Heart right ventricle (tissue), 16 donors: ENCODE measurements at regions of chr2 and their contacts with region 1.

Region 1: DNA sequence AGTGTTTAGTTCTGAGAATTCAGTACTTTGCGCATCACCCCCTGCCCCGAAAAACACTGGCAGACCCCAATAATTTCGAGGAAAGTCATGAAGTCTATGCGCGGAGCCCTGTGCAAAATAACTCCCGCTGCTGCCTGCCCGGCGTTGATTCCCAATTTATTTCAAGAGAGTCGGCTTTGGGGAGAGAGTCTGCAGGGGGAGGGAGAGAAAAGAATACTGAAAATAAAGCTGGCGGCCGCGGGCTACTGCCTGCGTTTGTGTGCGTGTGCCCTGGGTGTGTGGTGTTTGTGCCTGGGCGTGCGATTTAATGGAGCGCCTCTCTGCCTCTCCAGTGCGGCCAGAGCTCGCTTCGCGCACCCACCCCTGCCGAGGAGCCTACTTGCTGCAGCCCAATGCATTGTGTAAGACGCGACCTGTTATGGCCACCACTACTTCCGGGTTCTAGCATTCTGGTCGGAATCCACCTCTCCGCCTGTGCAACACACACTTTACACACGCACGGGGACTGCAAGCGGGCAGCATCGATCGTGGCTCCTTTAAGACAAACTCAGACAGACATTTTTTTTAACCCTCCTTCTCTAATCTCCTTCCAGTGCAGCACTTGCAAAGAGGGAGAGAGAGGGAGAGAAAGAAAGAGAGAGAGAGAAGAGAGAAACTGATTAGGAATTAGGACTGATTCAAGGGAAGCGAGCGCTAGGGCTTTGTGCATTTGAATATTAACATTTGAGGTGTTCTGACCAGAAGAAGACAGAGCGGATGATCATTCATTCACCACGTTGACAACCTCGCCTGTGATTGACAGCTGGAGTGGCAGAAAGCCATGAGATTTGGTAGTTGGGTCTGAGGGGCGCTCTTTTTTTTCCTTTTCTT is at the start of gene MEIS1:
- DNase-seq: peak; percentile 87 to 92
- ATAC-seq: peak; percentile 84 to 91 (median 88)
- H3K4me3 ChIP-seq: peak within 1 kb of the TSS; percentile 39 to 87 (median 78)
- H3K27ac ChIP-seq: peak within 1 kb of the TSS; percentile 74 to 95 (median 90)
- H3K4me1 ChIP-seq: peaks cover 0 to 33% (median 0%) of the 10 kb centered on the region in 9 donors
- H3K27me3 ChIP-seq: peaks cover 0 to 98% (median 0%) of the 10 kb centered on the region in 7 donors
- CTCF ChIP-seq: no peak
- total RNA-seq, gene MEIS1: 24.8 to 63.8 (median 38.6) TPM

Region 2: GRCh38 chr2:66127061-66127460 is 307.9 kb before region 1 on chr2:
- intact Hi-C with region 1: no loop called
- DNase-seq: no peak
- ATAC-seq: no peak
- H3K4me3 ChIP-seq: no peak overlapping the region
- H3K27ac ChIP-seq: no peak overlapping the region
- H3K4me1 ChIP-seq: no peaks in the 10 kb centered on the region
- H3K27me3 ChIP-seq: no peaks in the 10 kb centered on the region
- CTCF ChIP-seq: no peak

Region 3: DNA sequence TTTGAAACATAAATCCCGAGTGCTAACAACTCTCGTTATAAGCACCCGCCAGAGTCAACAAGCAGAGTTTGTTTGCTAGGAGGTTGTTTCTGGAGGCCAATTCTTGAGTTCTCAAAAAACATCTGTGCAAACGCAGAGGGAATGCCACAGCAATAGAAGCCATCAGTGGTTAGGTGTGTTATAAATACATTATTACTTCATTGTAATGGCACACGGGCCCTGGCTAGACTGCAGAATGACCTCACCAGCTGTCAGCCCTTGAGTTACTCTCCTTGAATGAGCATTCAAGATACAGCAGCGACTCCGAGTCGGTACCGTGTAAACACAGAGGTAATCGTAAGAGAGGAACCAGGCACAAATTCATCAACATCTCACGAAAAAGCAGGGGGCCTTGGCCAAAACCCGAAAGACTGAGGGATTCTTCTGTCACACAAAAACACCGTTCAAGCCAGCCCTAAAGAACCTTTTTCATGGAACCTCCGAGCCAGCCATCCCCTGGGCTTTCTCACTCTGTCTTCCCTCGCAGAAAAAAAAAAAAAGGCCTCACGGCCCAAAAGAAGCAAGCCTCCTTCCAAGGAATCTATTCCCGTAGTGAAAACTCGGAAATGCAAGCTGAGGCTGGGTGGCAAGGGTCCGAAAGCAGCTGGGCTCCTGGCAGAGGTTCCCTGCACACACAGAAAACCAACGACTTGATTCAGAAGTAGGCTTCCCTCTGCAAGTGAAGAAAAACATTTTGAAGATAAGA is 133.7 kb before region 1 on chr2:
- intact Hi-C with region 1: loop called in 1 of 10 experiments (anchors 5 kb)
- DNase-seq: peak; percentile 41 to 64
- ATAC-seq: peak; percentile 78 to 97 (median 90)
- H3K4me3 ChIP-seq: peak overlapping the region in 7 of 10 donors; percentile 6 to 37 (median 31)
- H3K27ac ChIP-seq: peak overlapping the region in 7 of 10 donors; percentile 1 to 77 (median 72)
- H3K4me1 ChIP-seq: peaks cover 0 to 34% (median 6%) of the 10 kb centered on the region in 9 donors
- H3K27me3 ChIP-seq: no peaks in the 10 kb centered on the region
- CTCF ChIP-seq: no peak

Region 4: GRCh38 chr2:66555501-66556324 is 120.8 kb after region 1 on chr2:
- intact Hi-C with region 1: loop called in 1 of 10 experiments (anchors 5 kb)
- DNase-seq: peak in 1 of 2 donors; percentile 17
- ATAC-seq: peak; percentile 63 to 82 (median 74)
- H3K4me3 ChIP-seq: peak overlapping the region; percentile 5 to 51 (median 42)
- H3K27ac ChIP-seq: peak overlapping the region; percentile 13 to 88 (median 72)
- H3K4me1 ChIP-seq: peaks cover 0 to 30% (median 14%) of the 10 kb centered on the region in 9 donors
- H3K27me3 ChIP-seq: no peaks in the 10 kb centered on the region
- CTCF ChIP-seq: no peak

Region 5: DNA sequence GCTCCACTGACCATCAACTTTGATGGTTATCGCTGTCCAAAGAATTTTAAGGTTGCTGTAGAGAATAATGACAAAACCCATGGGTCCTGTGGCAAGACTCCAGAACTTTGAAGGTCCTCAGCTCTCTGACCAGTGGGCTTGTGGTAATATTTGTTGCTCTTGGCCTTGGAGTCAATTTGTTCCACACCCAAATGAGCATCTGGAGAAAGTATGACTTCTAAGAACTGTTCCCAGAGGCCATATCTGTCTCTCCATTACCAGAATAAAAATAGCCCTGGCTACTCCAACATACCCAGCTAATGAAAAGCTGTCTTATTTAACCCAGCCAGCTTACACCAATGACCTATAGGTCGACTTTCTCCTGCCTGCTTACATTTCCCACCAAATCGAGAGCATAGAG is 466.4 kb after region 1 on chr2:
- intact Hi-C with region 1: no loop called
- DNase-seq: peak in 1 of 2 donors; percentile 22
- ATAC-seq: peak in 7 of 8 donors; percentile 25 to 79 (median 67)
- H3K4me3 ChIP-seq: no peak overlapping the region
- H3K27ac ChIP-seq: no peak overlapping the region
- H3K4me1 ChIP-seq: peaks cover 0 to 29% (median 0%) of the 10 kb centered on the region in 9 donors
- H3K27me3 ChIP-seq: no peaks in the 10 kb centered on the region
- CTCF ChIP-seq: no peak

Region 6: DNA sequence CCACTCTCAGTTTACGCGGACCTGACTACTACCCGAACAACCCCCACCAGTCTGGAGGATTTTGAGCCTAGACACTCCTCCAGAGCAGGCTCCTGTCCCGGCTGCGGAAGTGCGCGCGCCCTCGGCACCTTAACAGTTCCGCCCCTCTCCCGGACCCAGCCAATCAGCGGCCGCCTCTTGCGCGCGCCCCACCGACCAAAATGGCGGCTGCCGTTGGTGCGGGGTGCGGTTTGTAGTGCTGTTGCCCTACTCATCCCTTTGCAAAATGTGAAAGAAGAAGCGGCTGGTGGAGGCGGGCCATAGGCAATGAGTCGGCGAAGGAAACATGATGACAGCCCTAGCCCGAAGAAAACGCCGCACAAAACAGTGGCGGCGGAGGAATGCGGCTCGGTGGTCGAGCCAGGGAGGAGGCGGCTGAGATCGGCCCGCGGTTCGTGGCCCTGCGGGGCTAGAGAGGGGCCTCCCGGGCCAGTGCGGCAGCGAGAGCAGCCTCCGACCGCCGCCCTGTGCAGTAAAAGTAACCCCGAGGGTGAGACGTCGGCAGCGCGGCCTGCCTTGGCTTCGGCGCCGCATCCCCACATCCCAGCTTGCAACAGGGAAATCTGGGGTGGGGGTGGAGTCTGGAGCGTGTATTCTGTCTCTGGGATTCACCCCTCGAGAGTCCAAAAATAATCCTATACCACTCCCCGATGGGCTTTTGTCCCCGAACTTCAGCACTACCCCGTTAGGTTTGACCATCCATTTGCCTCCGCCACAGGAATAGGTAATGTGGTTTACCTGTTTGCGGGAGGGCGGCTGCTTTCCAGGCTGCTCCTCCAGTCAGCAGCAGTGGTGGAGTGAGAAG is 962.5 kb after region 1 on chr2 and contains the start of gene ETAA1:
- intact Hi-C with region 1: loop called in 2 of 10 experiments (anchors 5 to 10 kb)
- DNase-seq: peak; percentile 94 to 95
- ATAC-seq: peak; percentile 100
- H3K4me3 ChIP-seq: peak within 1 kb of the TSS; percentile 66 to 99 (median 93)
- H3K27ac ChIP-seq: peak within 1 kb of the TSS; percentile 57 to 97 (median 89)
- H3K4me1 ChIP-seq: peaks cover 0 to 39% (median 20%) of the 10 kb centered on the region in 9 donors
- H3K27me3 ChIP-seq: no peaks in the 10 kb centered on the region
- CTCF ChIP-seq: peak in 1 of 9 donors; percentile 8
- total RNA-seq, gene ETAA1: 3.7 to 7.0 (median 5.4) TPM

Region 7: GRCh38 chr2:67840460-67841068 is 1405.7 kb after region 1 on chr2:
- intact Hi-C with region 1: loop called in 4 of 10 experiments (anchors 5 to 10 kb)
- DNase-seq: peak; percentile 63 to 66
- ATAC-seq: peak; percentile 91 to 98 (median 96)
- H3K4me3 ChIP-seq: no peak overlapping the region
- H3K27ac ChIP-seq: no peak overlapping the region
- H3K4me1 ChIP-seq: no peaks in the 10 kb centered on the region
- H3K27me3 ChIP-seq: no peaks in the 10 kb centered on the region
- CTCF ChIP-seq: peak; percentile 49 to 88 (median 76)

Region 8: GRCh38 chr2:68031542-68032160 is 1596.7 kb after region 1 on chr2:
- intact Hi-C with region 1: loop called in 1 of 10 experiments (anchors 10 kb)
- DNase-seq: no peak
- ATAC-seq: no peak
- H3K4me3 ChIP-seq: no peak overlapping the region
- H3K27ac ChIP-seq: no peak overlapping the region
- H3K4me1 ChIP-seq: peaks cover 0 to 3% (median 0%) of the 10 kb centered on the region in 9 donors
- H3K27me3 ChIP-seq: peaks cover 0 to 10% (median 0%) of the 10 kb centered on the region in 7 donors
- CTCF ChIP-seq: peak; percentile 48 to 81 (median 72)